ENCODE measurements at regions of chr18 and their contacts with region 1.

Region 1: DNA sequence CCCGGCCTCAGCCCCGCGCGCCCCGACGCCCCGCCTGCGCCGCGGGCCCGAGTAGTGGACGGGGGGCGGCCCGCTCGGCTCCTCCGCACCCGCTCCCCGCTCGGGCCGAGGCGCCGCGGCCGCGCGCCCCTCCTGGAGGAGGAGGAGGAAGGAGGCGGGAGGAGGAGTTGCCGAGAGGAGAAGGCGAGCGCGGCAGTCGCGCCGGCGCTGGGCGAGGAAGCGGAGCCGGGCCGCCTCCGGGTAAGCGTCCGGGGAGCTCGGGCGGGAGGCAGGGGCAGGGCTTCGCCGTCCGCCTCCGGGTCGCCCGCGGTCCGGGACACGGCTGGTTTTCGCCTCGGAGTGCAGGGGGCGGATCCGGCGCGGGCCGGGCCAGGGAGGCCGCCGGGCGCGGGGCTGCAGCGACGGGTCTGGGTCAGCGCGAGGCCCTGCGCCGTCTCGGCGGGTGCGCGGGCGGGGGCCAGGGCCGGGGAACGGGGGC is at the start of gene SOCS6:
- DNase-seq: peak; percentile 70
- H3K4me3 ChIP-seq: peak within 1 kb of the TSS; percentile 80 to 99 (median 91)
- H3K27ac ChIP-seq: peak within 1 kb of the TSS; percentile 82
- H3K4me1 ChIP-seq: peaks cover 21% of the 10 kb centered on the region
- H3K27me3 ChIP-seq: no peaks in the 10 kb centered on the region
- CTCF ChIP-seq: no peak
- total RNA-seq, gene SOCS6: 22.7 to 31.5 TPM

Region 2: DNA sequence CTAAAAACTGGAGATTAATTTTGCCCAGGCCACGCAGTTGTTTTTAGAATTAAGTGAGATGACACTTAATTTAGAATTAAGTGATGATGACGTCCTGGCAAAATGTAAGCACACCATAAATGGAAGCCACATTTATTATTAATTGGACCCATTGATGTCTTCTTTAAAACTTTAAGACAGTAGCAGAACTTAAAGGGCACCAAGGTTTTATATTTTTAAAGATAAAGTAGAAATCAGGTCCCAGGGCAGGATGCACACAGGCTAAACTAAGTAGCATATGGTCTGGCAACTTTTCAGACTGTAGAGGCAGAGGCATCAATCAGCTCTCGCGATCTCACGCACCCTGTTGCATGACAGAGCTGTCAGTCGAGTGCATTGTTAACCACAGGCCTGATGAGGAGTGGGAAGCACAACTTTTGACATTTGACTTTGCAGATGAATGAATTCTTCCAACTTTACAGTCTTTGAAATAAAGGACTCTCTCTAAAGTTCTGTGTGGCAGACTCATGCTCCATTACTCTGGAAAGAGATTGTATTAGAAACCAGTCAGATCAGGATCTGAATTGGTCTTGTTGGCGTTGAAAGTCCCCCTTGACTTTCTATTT is 573.6 kb before region 1 on chr18:
- CTCF ChIA-PET with region 1: no interaction called
- dilution Hi-C with region 1: no loop called
- in situ Hi-C with region 1: no loop called
- intact Hi-C with region 1: no loop called
- DNase-seq: no peak
- H3K4me3 ChIP-seq: no peak overlapping the region
- H3K27ac ChIP-seq: no peak overlapping the region
- H3K4me1 ChIP-seq: no peaks in the 10 kb centered on the region
- H3K27me3 ChIP-seq: no peaks in the 10 kb centered on the region
- CTCF ChIP-seq: no peak

Region 3: DNA sequence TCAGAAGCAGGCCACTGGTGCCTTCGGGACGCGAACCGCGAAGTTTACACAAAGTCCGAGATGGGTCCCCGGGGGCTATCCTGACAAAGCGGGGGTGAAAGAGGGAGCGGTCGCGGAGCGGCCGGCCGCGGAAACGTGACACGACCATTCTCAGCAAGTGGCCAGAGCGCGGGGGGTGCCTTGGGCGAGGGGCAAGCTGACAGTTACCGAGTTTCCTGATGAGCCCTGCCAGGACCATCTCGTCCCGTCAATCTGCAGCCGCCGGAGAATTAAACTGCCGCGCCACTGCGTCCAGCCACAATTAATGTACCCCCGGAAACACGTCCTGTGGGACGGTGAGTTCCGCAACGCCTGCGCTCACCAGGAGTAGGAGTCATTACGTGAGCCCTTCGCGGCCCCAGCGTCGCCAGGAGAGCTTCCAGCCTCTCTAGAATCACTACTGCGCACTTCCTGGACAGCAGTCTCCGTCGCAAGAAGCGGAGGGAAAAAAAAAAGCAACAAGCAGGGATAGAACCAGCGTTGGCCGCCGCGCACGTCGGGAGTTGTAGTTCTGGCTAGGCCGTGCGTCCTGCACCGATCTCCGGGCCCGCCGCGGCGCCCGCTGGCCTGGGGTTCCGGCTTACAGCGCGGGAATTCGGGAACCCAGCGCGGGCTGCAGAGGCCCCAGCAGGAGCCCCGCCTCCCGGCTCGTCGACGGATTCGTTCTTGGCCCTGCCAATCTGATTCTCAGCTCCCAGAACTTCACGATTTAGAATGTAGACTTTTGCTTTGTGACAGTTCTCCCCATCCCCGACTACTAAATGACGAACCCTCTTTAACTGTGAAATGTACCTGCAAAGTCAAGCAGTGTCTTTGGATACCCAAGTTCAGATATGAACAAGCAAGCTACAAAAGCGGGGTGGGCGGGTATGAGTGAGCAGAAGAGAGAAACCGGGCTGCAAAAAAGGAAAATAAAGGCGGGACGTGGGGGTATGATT is 83.2 kb before region 1 on chr18 and contains the start of gene RTTN:
- CTCF ChIA-PET with region 1: no interaction called
- dilution Hi-C with region 1: no loop called
- in situ Hi-C with region 1: no loop called
- intact Hi-C with region 1: loop called (anchors 2 kb)
- DNase-seq: peak; percentile 93
- H3K4me3 ChIP-seq: peak within 1 kb of the TSS; percentile 84 to 94 (median 87)
- H3K27ac ChIP-seq: peak within 1 kb of the TSS; percentile 92
- H3K4me1 ChIP-seq: peaks cover 12% of the 10 kb centered on the region
- H3K27me3 ChIP-seq: no peaks in the 10 kb centered on the region
- CTCF ChIP-seq: no peak
- total RNA-seq, gene RTTN: 31.5 to 59.4 TPM

Region 4: DNA sequence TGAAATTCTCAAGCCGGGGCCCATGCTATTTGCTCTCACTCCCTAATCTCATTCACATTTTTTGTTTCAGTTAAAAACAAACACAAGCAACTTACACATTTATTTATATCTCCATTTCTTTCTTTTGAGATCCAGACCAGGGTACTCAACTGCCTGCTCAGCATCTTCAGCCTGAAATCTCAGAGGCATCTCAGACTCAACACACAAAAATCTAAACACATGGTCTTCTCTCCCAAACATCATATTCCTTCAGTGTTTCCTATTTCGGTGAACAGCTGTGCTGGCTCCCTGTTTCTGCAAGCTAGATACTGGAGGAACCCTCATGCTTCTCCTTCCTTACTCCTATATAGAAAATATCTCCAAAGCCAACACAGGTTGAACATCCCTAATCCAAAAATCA is 72.1 kb before region 1 on chr18:
- CTCF ChIA-PET with region 1: no interaction called
- dilution Hi-C with region 1: no loop called
- in situ Hi-C with region 1: no loop called
- intact Hi-C with region 1: no loop called
- DNase-seq: no peak
- H3K4me3 ChIP-seq: no peak overlapping the region
- H3K27ac ChIP-seq: no peak overlapping the region
- H3K4me1 ChIP-seq: no peaks in the 10 kb centered on the region
- H3K27me3 ChIP-seq: peaks cover 2% of the 10 kb centered on the region
- CTCF ChIP-seq: no peak

Region 5: DNA sequence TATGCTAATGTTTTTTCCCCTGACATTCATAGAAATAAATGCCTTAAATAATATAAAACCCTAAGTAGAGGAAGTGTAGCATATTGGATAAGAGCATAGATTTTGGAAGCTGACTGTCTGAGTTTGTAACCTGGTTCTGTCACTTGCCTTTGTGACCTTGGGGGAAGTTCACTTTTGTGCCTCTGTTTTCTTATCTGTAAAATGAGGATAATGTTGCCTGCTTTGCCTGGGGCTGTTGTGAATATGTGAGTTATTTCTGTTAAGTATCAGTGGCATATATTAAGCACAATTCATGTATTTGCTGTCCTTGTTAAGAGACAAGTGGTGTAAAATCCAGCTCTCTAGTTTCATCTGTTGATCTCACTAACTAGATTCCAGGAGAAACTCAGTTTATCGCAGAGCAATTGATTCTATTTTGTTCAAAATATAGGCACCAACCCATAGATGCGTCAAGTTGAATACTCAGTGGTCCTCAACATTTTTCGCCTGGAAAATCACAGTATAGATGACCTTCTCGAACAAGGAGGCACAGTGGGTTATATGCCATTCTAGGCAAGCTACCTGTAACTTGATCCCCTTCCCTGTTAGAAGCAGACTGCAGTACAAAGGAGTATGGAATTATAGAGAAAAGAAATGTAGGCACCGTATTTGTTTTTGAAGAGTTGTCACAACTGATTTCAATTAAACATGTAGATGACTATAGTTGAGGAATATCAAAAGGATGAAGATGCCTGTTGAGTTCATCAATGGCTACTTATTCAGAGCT is 66.9 kb after region 1 on chr18:
- CTCF ChIA-PET with region 1: no interaction called
- dilution Hi-C with region 1: loop called (anchors 5 kb)
- in situ Hi-C with region 1: no loop called
- intact Hi-C with region 1: no loop called
- DNase-seq: no peak
- H3K4me3 ChIP-seq: no peak overlapping the region
- H3K27ac ChIP-seq: no peak overlapping the region
- H3K4me1 ChIP-seq: peaks cover 20% of the 10 kb centered on the region
- H3K27me3 ChIP-seq: no peaks in the 10 kb centered on the region
- CTCF ChIP-seq: no peak

Region 6: GRCh38 chr18:70373042-70373519 is 84.2 kb after region 1 on chr18:
- CTCF ChIA-PET with region 1: no interaction called
- dilution Hi-C with region 1: no loop called
- in situ Hi-C with region 1: no loop called
- intact Hi-C with region 1: loop called (anchors 5 kb)
- DNase-seq: peak; percentile 99
- H3K4me3 ChIP-seq: no peak overlapping the region
- H3K27ac ChIP-seq: peak overlapping the region; percentile 92
- H3K4me1 ChIP-seq: peaks cover 29% of the 10 kb centered on the region
- H3K27me3 ChIP-seq: no peaks in the 10 kb centered on the region
- CTCF ChIP-seq: no peak

Region 7: DNA sequence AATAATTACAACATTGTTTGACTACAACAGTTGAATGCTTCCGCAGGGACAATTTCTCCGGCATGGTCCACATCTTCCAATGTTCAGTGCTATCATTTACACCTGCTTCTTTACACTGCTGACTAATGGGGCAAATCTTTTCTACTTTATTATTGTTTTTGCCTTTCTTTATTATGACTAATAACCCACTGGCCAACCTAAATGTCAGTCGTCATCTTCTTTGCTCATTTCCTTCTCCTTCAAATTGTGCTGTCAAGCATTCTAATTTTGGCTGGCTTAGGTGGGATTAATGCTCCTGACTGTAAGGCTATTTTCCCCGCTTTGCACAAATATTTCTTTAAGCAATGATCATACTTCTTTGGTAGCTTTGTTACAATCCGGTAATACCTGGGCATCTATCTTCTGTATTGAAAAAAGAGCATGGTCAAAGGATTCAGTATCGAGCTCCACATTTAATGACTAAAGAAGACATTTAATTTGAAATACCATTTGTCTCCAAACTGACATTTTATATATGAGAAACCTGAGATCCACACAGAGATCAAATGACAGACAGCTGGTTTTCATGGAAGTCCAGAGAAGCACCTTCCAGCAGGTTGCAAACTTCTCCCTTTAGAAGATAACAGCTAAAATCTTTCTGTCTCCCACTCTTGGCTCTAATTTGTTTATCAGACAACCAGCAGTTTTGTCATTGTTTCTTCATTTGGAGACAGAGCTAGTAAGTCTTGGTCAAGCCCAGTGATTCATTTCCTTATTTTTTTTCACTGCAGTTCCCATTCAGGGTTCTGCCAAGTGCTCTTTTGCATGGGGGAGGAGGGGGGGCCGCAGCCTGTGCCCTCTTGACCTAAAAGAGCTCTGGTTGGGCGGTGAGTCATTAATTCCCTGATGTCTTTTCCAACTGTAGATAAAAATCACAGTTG is 132.8 kb after region 1 on chr18:
- CTCF ChIA-PET with region 1: no interaction called
- dilution Hi-C with region 1: no loop called
- in situ Hi-C with region 1: loop called in 1 of 2 experiments (anchors 25 kb)
- intact Hi-C with region 1: loop called (anchors 2 kb)
- DNase-seq: peak; percentile 96
- H3K4me3 ChIP-seq: no peak overlapping the region
- H3K27ac ChIP-seq: peak overlapping the region; percentile 95
- H3K4me1 ChIP-seq: peaks cover 45% of the 10 kb centered on the region
- H3K27me3 ChIP-seq: no peaks in the 10 kb centered on the region
- CTCF ChIP-seq: no peak

Region 8: GRCh38 chr18:70428439-70428838 is 139.5 kb after region 1 on chr18:
- CTCF ChIA-PET with region 1: no interaction called
- dilution Hi-C with region 1: no loop called
- in situ Hi-C with region 1: loop called in 1 of 2 experiments (anchors 25 kb)
- intact Hi-C with region 1: loop called (anchors 2 kb)
- DNase-seq: no peak
- H3K4me3 ChIP-seq: no peak overlapping the region
- H3K27ac ChIP-seq: no peak overlapping the region
- H3K4me1 ChIP-seq: peaks cover 23% of the 10 kb centered on the region
- H3K27me3 ChIP-seq: no peaks in the 10 kb centered on the region
- CTCF ChIP-seq: no peak